Common myeloid progenitor, CD34-positive (primary cell): ENCODE measurements at regions of chr17 and their contacts with region 1.

Region 1: DNA sequence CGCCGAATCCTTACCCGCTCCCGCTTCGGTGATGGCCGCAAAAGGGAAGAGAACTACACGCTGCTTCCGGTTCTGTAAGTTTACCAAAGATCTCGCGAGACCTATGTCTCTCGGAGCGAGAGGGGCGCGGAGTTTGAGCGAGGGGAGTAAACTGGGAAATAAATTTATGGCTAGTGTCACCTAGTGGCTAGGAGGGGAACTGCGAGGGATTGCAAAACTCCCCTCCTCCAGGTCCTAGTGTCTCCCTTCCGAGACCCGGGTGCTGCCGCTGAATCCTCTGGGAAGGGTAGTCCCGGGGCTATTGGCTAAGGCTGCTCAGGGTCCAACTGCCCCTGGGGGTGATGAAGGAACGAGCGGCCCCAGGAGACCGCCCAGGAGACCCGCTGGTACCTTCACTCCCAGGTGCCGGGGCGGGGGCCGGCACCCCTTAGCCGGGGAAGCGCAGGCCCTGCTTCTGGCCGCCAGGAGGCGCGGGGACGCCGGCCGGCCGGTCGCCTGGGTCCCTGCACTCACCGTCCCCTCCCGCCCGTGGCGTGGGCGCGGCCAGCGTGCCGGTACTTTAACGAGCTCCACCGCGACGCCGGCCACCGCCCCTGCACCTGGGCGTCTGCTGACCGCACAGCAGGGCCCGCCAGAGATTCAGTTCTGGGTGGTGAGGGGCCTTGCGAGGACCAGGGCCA is at the start of gene RPL26:
- DNase-seq: peak; percentile 98 to 99 (median 98)
- H3K4me3 ChIP-seq: peak within 1 kb of the TSS; percentile 84 to 99 (median 94)
- H3K27ac ChIP-seq: peak within 1 kb of the TSS; percentile 81 to 91
- H3K4me1 ChIP-seq: peaks cover 8 to 37% (median 30%) of the 10 kb centered on the region in 4 experiments
- H3K27me3 ChIP-seq: no peaks in the 10 kb centered on the region

Region 2: DNA sequence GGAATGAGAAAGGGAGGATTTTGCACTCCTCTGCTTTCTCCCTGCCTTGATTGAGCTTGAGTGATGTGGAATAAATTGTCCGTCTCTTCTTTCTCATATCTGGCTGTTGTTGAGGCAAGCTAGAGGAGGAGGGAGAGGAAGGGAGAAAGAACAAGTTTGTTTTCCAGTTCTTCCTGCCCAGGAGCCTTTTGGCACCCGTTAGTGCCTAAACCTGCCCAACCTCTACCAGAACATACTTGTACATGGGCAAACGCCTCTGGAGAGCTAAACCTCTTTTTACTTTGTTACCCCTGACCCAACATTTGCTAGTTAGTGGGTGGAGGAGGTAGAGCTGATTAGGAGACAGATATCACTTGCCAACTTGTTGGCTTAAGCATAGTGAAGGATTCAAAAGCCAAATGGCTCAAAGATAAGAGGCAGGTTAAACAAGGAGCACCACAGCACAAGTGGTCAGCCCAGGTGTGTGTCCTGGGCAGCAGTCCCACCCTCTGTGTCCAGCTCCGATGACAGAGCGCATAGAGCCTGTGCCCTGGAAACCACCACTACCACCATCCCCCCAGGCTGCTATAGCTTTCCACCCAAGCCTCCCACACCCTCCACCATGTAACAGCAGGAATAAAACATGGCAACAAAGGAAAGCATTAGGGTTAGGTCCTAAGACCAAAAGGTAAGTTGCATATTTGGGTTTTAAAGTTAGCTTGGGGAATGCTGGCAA is 37.2 kb before region 1 on chr17:
- CTCF ChIA-PET with region 1: no interaction called
- POLR2A ChIA-PET with region 1: no interaction called
- DNase-seq: no peak
- H3K4me3 ChIP-seq: no peak overlapping the region
- H3K27ac ChIP-seq: no peak overlapping the region
- H3K4me1 ChIP-seq: peaks cover 0 to 12% (median 3%) of the 10 kb centered on the region in 4 experiments
- H3K27me3 ChIP-seq: peaks cover 0 to 2% (median 0%) of the 10 kb centered on the region in 5 experiments

Region 3: GRCh38 chr17:8393420-8394241 is 10.3 kb after region 1 on chr17:
- CTCF ChIA-PET with region 1: interaction called, 10 read pairs
- POLR2A ChIA-PET with region 1: no interaction called
- DNase-seq: peak; percentile 63 to 82 (median 71)
- H3K4me3 ChIP-seq: peak overlapping the region in 1 of 7 experiments; percentile 17
- H3K27ac ChIP-seq: no peak overlapping the region
- H3K4me1 ChIP-seq: peaks cover 0 to 10% (median 4%) of the 10 kb centered on the region in 4 experiments
- H3K27me3 ChIP-seq: peaks cover 0 to 6% (median 4%) of the 10 kb centered on the region in 5 experiments

Region 4: GRCh38 chr17:8572764-8573163 is 189.5 kb after region 1 on chr17:
- CTCF ChIA-PET with region 1: no interaction called
- POLR2A ChIA-PET with region 1: no interaction called
- DNase-seq: peak; percentile 34 to 72 (median 64)
- H3K4me3 ChIP-seq: no peak overlapping the region
- H3K27ac ChIP-seq: no peak overlapping the region
- H3K4me1 ChIP-seq: no peaks in the 10 kb centered on the region
- H3K27me3 ChIP-seq: no peaks in the 10 kb centered on the region